ENCODE measurements at regions of chr9 and their contacts with region 1.

Region 1: GRCh38 chr9:105046907-105047741 is 119.2 kb upstream of the ABCA1 start:
- DNase-seq: no peak
- H3K4me3 ChIP-seq: no peak overlapping the region
- H3K27ac ChIP-seq: peak overlapping the region in 2 of 5 donors; percentile 13 to 19
- H3K4me1 ChIP-seq: peaks cover 4 to 25% of the 10 kb centered on the region in 2 donors
- H3K27me3 ChIP-seq: no peaks in the 10 kb centered on the region
- CTCF ChIP-seq: no peak
- POLR2A ChIP-seq: no peak

Region 2: DNA sequence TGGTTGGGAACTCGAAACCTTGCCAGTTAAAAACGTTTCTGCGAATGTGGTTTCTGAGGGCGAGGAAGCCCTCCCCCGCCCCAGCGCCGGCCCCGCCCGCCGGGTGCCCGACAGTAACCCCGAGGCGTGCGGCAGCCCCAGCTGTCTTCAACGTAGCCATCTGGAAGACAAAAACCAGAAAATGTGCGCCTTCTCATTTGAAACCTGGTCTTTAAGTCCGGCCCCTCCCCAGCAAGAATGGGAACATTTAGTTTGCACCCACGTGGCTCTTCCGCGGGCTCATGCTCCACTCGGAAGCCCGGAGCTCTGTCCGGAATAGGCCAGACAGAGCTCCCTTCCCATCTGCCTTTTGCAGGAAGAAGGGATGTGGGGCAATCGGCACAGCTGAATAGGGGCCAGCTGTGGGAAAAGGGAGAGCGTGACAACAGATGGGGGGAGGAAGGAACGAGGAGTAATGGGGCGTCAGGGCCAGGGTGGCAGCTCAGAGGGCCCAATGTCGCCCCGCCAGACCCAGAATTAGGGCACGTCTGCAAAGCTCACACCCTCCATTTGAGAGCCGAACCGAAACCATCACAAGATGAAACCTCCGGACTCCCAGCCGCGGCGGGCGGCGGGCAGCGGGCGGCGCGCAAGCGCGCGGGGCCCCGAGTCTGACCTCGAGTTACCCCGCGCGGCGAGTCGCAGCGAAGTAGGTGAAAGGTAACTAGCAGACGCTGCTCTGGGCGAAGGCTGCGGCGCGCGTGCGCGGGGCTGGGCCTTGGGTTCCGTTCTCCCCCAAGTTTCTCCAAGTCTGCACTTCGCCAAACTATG is 55.8 kb before region 1 on chr9:
- intact Hi-C with region 1: loop called in 1 of 2 experiments (anchors 10 kb)
- DNase-seq: peak; percentile 93 to 97 (median 96)
- H3K4me3 ChIP-seq: peak overlapping the region in 3 of 4 donors; percentile 23 to 69 (median 52)
- H3K27ac ChIP-seq: peak overlapping the region; percentile 88 to 99 (median 99)
- H3K4me1 ChIP-seq: peaks cover 35 to 39% of the 10 kb centered on the region in 2 donors
- H3K27me3 ChIP-seq: no peaks in the 10 kb centered on the region
- CTCF ChIP-seq: no peak
- POLR2A ChIP-seq: peak; percentile 73 to 84